ENCODE measurements at regions of chr14 and their contacts with region 1.

Region 1: DNA sequence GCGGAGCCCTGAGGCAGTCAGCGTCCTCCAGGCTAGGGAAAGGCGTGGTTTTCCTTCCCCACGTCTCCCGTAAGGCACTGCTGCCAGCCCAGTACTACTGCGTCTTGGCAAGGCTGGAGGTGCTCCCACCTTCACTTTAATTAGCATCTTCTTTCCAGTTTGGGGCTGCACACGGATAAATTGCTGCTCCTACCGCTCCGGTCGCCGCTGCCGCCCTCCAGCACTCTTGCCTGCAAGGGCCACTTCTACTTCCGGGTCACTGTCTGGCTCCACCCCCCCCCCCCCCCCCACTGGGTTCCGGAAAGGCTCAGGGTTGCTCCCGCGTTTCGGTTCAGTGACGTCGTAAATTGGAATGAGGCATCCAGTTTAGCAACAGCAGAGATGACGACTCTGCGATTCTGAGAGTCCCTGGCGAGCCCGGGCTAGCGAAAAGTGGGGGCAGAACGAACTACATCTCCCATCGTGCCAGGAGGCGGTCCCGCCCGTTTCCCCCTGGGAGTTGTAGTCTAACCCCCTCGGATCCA is at the start of gene NEDD8:
- DNase-seq: peak; percentile 98
- H3K4me3 ChIP-seq: peak within 1 kb of the TSS; percentile 77
- H3K27ac ChIP-seq: peak within 1 kb of the TSS; percentile 88
- H3K4me1 ChIP-seq: peaks cover 15% of the 10 kb centered on the region
- H3K27me3 ChIP-seq: no peaks in the 10 kb centered on the region
- CTCF ChIP-seq: no peak
- total RNA-seq, gene NEDD8: 257 and 266 TPM in 2 replicates

Region 2: DNA sequence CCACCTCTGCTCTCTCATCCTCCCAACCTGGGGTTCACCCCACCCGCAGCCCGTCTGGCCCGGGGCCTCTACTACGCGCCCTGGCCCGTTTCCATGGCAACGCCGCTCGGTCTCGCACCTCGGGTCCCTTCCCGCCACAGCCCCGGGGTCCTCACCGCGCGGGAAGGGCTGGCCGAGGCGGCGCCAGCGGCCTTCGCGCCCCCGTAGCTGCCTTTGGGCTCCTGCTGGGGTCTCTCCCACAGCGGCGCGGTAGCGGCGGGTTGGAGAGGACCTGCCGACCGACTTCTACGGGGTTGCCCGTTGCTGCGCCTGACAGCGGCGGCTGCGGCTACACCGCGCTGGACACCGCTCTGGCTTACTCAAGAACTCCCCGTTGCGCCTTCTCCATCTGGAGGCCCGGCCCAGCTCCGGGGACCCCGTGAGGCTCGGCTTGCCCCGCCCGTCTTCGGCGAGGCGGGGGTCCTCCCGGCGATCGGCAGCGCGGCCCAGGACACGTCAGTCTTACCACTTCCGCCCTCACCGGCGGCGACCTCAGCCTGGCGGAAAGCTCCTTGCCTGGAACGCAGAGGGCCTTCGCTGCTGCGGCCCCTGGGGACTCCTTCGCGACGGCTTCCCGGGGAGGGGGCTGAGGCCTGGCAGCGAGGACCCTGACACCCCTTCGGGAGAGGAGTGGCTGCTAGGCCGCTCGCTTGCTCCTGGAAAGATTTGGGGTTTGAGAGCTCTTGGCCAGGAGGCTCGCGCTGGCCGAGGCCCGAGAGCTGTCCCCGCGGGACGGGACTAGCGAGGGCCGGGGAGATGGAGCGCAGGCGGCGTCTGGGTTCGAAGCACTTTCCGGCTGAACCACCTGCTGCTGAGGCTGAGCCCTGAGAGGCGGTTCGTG is 36.8 kb before region 1 on chr14 and contains the start of gene TM9SF1:
- CTCF ChIA-PET with region 1: no interaction called
- POLR2A ChIA-PET with region 1: no interaction called
- intact Hi-C with region 1: loop called (anchors 2 kb)
- DNase-seq: peak; percentile 91
- H3K4me3 ChIP-seq: peak within 1 kb of the TSS; percentile 81
- H3K27ac ChIP-seq: peak within 1 kb of the TSS; percentile 97
- H3K4me1 ChIP-seq: peaks cover 11% of the 10 kb centered on the region
- H3K27me3 ChIP-seq: no peaks in the 10 kb centered on the region
- CTCF ChIP-seq: no peak
- total RNA-seq, gene TM9SF1: 46.9 and 55.5 TPM in 2 replicates

Region 3: DNA sequence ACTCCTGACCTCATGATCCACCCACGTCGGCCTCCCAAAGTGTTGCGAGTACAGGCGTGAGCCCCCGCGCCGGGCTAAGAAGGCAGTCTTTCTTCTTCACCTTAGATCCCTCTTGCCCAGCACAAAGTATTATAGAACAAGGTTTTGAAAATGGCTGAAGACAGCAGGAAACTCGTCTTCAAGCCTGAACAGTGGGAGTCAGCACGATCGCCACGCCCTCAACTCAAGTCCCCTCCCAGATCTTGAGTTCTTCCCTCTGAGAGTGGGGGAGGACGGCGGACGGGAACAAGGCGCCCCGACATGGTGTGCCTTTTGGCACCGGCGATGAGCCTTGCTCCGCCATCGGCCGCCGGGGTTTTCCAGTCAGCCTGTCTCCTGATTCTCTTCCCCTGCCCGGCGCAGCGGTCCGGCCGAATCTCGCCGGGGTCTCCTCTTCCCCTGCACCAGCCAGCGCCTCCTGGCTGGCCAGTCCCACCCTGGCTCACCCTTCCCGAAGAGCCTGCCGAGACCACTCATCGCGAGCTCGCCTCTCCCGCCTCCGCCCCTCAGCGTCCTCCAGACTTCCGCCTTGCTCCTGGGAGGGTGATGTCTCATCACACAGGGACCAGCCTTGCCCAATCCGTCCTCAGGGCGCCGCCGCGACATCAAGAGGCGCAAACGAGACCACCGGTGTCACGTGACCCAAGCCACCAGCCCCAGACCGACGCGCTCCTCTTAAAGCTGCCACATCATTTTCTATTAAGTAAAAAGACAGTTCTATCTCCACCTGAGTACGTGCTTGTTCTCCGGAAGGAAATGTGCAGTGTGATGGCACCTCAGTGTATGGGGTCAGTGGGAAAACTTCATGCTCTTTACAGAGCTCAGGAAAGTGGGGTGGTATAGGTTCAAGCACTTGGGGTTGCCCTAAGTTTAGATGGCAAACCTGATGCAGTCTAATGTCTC is 19.0 kb before region 1 on chr14 and contains the start of gene CHMP4A:
- CTCF ChIA-PET with region 1: no interaction called
- POLR2A ChIA-PET with region 1: no interaction called
- intact Hi-C with region 1: loop called (anchors 1 kb)
- DNase-seq: peak; percentile 99
- H3K4me3 ChIP-seq: peak within 1 kb of the TSS; percentile 58
- H3K27ac ChIP-seq: peak within 1 kb of the TSS; percentile 90
- H3K4me1 ChIP-seq: peaks cover 9% of the 10 kb centered on the region
- H3K27me3 ChIP-seq: no peaks in the 10 kb centered on the region
- CTCF ChIP-seq: no peak
- total RNA-seq, gene CHMP4A: 51.9 and 56.7 TPM in 2 replicates

Region 4: GRCh38 chr14:24219080-24219479 is 13.1 kb before region 1 on chr14:
- CTCF ChIA-PET with region 1: no interaction called
- POLR2A ChIA-PET with region 1: interaction called, 14 read pairs
- intact Hi-C with region 1: no loop called
- DNase-seq: no peak
- H3K4me3 ChIP-seq: no peak overlapping the region
- H3K27ac ChIP-seq: no peak overlapping the region
- H3K4me1 ChIP-seq: peaks cover 3% of the 10 kb centered on the region
- H3K27me3 ChIP-seq: no peaks in the 10 kb centered on the region
- CTCF ChIP-seq: no peak

Region 5: GRCh38 chr14:24282736-24283135 is 50.6 kb after region 1 on chr14:
- CTCF ChIA-PET with region 1: interaction called, 11 read pairs
- POLR2A ChIA-PET with region 1: no interaction called
- intact Hi-C with region 1: no loop called
- DNase-seq: no peak
- H3K4me3 ChIP-seq: no peak overlapping the region
- H3K27ac ChIP-seq: no peak overlapping the region
- H3K4me1 ChIP-seq: no peaks in the 10 kb centered on the region
- H3K27me3 ChIP-seq: no peaks in the 10 kb centered on the region
- CTCF ChIP-seq: no peak